ENCODE measurements at regions of chr3 and their contacts with region 1.

Region 1: GRCh38 chr3:88343259-88343658 is 193.5 kb downstream of the C3orf38 start:
- DNase-seq: no peak
- H3K4me3 ChIP-seq: no peak overlapping the region
- H3K27ac ChIP-seq: no peak overlapping the region
- H3K4me1 ChIP-seq: no peaks in the 10 kb centered on the region
- H3K27me3 ChIP-seq: no peaks in the 10 kb centered on the region
- CTCF ChIP-seq: no peak
- EP300 ChIP-seq: no peak
- POLR2A ChIP-seq: no peak

Region 2: DNA sequence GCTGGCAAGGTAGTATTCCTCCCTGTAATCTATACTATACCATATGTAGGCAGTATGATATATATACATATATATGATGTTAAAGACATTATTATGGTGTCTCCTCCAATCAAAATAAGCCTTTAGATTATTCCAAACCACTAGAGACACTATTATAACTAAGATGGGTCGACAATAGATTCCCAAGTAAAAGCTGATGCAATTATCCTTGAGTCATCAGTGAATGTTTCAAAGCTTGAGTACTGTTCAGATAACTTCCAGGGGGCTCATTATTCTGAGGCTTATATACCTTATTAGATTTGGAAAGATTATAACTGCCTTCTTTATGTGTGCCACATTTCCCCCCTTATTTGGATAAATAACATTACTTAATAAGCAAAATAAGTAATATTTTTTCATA is 205.4 kb before region 1 on chr3:
- in situ Hi-C with region 1: no loop called
- intact Hi-C with region 1: no loop called
- DNase-seq: no peak
- H3K4me3 ChIP-seq: no peak overlapping the region
- H3K27ac ChIP-seq: no peak overlapping the region
- H3K4me1 ChIP-seq: peaks cover 0 to 4% (median 0%) of the 10 kb centered on the region in 4 donors
- H3K27me3 ChIP-seq: no peaks in the 10 kb centered on the region
- CTCF ChIP-seq: no peak
- EP300 ChIP-seq: no peak
- POLR2A ChIP-seq: no peak

Region 3: DNA sequence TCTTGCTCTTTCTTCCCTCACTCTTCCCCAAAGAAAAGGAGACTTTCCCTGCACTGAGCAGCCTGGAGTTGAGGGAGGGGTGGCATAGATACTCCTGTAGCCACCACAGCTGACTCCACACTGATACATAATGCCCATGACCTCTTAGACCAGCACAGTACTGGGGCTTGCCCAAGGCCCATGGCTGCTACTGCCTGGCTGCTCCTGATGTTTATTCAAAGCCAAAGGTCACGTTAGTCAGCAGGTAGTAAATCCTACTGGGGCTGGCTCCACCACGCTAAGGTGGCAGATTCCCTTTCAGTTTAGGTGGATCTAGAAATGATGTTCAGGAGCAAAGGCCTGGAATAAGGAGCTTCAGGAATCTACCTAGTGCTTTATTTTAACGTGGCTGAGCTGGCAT is 19.2 kb after region 1 on chr3:
- in situ Hi-C with region 1: no loop called
- intact Hi-C with region 1: loop called (anchors 1 kb)
- DNase-seq: peak; percentile 18
- H3K4me3 ChIP-seq: no peak overlapping the region
- H3K27ac ChIP-seq: no peak overlapping the region
- H3K4me1 ChIP-seq: no peaks in the 10 kb centered on the region
- H3K27me3 ChIP-seq: no peaks in the 10 kb centered on the region
- CTCF ChIP-seq: no peak
- EP300 ChIP-seq: no peak
- POLR2A ChIP-seq: no peak

Measured in transverse colon (tissue), 4 donors.